Activated CD4-positive, alpha-beta T cell treated with anti-CD3 and anti-CD28 coated beads, Interleukin-2, amount 10 ng/mL, durations not matched to agents 24 days and 14 days (primary cell): ENCODE measurements at regions of chr14 and their contacts with region 1.

Region 1: GRCh38 chr14:73491256-73492042 is 716 bp downstream of the RIOX1 start:
- DNase-seq: peak; percentile 93
- H3K4me3 Mint-ChIP-seq: peak overlapping the region; percentile 89
- H3K27ac Mint-ChIP-seq: peak overlapping the region; percentile 85
- H3K4me1 Mint-ChIP-seq: peaks cover 30% of the 10 kb centered on the region
- H3K27me3 Mint-ChIP-seq: peaks cover 12% of the 10 kb centered on the region

Region 2: DNA sequence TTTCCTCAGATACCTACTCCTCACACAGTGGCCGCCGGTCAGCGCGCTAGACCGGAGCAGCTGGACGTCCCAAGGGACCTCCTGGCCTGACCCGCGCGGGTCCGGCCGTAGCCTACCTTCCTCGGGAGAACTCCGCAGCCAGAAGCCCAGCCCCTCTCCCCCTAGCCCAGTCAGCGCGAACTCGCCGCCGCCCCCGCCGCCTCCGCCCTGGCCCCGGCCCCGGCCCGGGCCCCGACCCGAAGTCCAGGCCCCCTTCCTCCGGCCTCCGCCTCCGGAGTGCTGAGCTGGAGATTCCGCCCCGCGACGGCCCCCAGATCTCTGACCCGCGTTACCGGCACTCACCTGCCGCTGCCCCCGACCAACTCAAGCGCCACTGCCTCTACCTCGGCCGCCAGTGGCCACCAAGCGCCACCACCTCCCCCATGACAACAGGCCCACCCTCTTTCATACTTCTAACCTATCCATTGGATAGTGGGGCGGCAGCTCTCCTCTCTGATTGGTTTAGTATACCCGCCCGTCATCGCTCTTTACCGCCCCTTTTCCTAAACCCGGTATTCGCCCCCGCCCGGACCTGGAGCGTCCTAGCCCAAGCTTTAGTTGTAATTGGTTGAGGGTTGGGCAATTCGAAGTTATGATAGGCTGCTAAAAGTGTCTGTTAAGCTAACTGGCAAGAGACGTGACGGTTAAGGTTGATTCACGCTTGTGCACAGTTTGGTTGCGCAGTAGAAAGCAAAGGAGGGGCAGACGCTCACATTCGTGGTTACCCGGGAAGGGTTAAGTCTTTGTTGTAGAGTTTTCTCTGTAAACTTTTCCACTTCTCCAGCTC is 33.1 kb before region 1 on chr14 and contains the start of gene NUMB:
- intact Hi-C with region 1: loop called (anchors 1 kb)
- DNase-seq: peak; percentile 99
- H3K4me3 Mint-ChIP-seq: peak within 1 kb of the TSS; percentile 98
- H3K27ac Mint-ChIP-seq: peak within 1 kb of the TSS; percentile 98
- H3K4me1 Mint-ChIP-seq: peaks cover 47% of the 10 kb centered on the region
- H3K27me3 Mint-ChIP-seq: no peaks in the 10 kb centered on the region
- total RNA-seq, gene NUMB: 48.1 and 54.8 TPM in 2 replicates

Region 3: DNA sequence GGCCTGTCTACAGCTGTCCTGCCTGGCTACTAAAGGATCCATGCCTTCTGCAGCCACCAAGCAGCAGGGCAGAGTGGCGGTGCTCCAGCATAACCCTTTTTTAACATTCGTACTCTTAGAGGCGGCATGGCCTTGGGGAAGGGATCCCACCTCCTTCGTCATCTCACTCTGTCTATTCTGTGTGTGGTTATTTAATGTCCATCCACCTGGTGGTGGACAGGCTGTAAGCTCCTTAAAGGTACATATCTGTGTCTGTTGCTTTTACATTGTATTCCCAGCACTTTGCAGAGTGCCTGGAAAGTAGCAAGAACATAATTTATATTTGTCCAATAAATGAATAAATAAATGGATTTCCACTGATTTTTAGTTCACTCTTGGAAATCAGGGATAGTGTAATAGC is 29.8 kb after region 1 on chr14:
- intact Hi-C with region 1: no loop called
- DNase-seq: no peak
- H3K4me3 Mint-ChIP-seq: no peak overlapping the region
- H3K27ac Mint-ChIP-seq: no peak overlapping the region
- H3K4me1 Mint-ChIP-seq: no peaks in the 10 kb centered on the region
- H3K27me3 Mint-ChIP-seq: no peaks in the 10 kb centered on the region

Region 4: GRCh38 chr14:73568381-73568781 is 76.9 kb after region 1 on chr14:
- intact Hi-C with region 1: loop called (anchors 1 kb)
- DNase-seq: peak; percentile 65
- H3K4me3 Mint-ChIP-seq: peak overlapping the region; percentile 93
- H3K27ac Mint-ChIP-seq: peak overlapping the region; percentile 98
- H3K4me1 Mint-ChIP-seq: peaks cover 31% of the 10 kb centered on the region
- H3K27me3 Mint-ChIP-seq: no peaks in the 10 kb centered on the region

Region 5: GRCh38 chr14:73633116-73634010 is 141.9 kb after region 1 on chr14:
- intact Hi-C with region 1: loop called (anchors 5 kb)
- DNase-seq: peak; percentile 87
- H3K4me3 Mint-ChIP-seq: peak overlapping the region; percentile 76
- H3K27ac Mint-ChIP-seq: peak overlapping the region; percentile 41
- H3K4me1 Mint-ChIP-seq: peaks cover 4% of the 10 kb centered on the region
- H3K27me3 Mint-ChIP-seq: peaks cover 26% of the 10 kb centered on the region

Region 6: GRCh38 chr14:73713803-73714655 is 222.6 kb after region 1 on chr14 and contains the start of gene PNMA1:
- intact Hi-C with region 1: loop called (anchors 10 kb)
- DNase-seq: peak; percentile 96
- H3K4me3 Mint-ChIP-seq: peak within 1 kb of the TSS; percentile 92
- H3K27ac Mint-ChIP-seq: peak within 1 kb of the TSS; percentile 93
- H3K4me1 Mint-ChIP-seq: peaks cover 27% of the 10 kb centered on the region
- H3K27me3 Mint-ChIP-seq: no peaks in the 10 kb centered on the region
- total RNA-seq, gene PNMA1: 29.7 and 30.4 TPM in 2 replicates

Region 7: GRCh38 chr14:74018586-74019407 is 527.3 kb after region 1 on chr14 and contains the starts of genes BBOF1 and ENTPD5:
- intact Hi-C with region 1: loop called (anchors 2 kb)
- DNase-seq: peak; percentile 97
- H3K4me3 Mint-ChIP-seq: peak within 1 kb of the TSS; percentile 92
- H3K27ac Mint-ChIP-seq: peak within 1 kb of the TSS; percentile 97
- H3K4me1 Mint-ChIP-seq: peaks cover 17% of the 10 kb centered on the region
- H3K27me3 Mint-ChIP-seq: no peaks in the 10 kb centered on the region
- total RNA-seq, gene BBOF1: 0.57 and 0.72 TPM in 2 replicates
- total RNA-seq, gene ENTPD5: 10.6 and 12.2 TPM in 2 replicates